ENCODE measurements at regions of chr21 and their contacts with region 1.

Region 1: DNA sequence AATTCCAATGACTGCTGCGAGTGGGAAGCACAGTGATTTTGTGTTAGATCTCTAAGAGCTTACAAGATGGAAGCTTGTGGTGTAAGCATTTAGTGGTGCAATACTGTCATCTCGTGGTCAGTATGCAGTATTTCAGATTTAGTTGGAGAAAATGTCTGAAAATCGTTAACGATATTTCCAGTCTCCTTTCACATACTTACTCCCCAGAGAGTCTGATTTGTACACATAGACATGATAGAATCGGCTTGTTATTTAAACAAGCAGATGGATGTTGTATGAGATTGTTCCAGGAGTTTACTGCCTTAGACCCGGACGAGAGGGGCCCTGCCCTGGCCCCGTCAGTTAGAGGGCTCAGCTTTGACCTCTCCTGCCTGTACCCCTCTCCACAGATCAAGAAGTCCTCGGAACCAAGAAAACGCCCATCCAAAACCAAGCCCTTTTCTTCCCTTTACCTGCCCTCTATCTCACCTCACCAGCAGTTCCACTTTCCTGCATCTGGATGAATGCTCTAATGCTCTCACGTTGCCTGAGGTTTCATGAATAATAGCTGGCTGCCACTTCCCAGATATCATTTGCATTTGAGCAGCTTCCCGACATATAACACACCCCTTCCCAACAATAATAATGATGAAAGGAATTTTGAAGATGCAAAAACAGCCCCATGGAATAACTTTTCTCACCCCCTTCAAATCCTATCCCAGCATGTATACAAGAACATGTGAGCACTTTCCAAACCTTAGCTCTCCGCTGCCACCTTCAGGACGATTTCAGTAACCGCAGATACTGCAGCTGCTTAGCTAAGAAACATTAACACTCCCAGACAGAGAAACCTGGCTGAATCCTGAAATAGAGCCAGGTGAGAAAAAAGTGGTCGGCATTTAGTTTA is 247.3 kb downstream of the LTN1 start:
- ATAC-seq: peak; percentile 81 to 88 (median 86)
- H3K4me3 ChIP-seq: peak overlapping the region in 4 of 5 donors; percentile 16 to 22 (median 18)
- H3K27ac ChIP-seq: no peak overlapping the region
- H3K4me1 ChIP-seq: no peaks in the 10 kb centered on the region

Region 2: GRCh38 chr21:26850108-26850643 is 1895.2 kb before region 1 on chr21:
- in situ Hi-C with region 1: loop called in 6 of 9 experiments (anchors 10 to 25 kb)
- ATAC-seq: no peak
- H3K4me3 ChIP-seq: no peak overlapping the region
- H3K27ac ChIP-seq: no peak overlapping the region
- H3K4me1 ChIP-seq: peaks cover 2 to 6% of the 10 kb centered on the region in 2 donors

Region 3: GRCh38 chr21:28069450-28069923 is 675.9 kb before region 1 on chr21:
- in situ Hi-C with region 1: loop called in 1 of 9 experiments (anchors 25 kb)
- ATAC-seq: peak in 1 of 8 experiments; percentile 82
- H3K4me3 ChIP-seq: no peak overlapping the region
- H3K27ac ChIP-seq: no peak overlapping the region
- H3K4me1 ChIP-seq: peaks cover 0 to 3% of the 10 kb centered on the region in 2 donors

Region 4: GRCh38 chr21:28342212-28342810 is 403.1 kb before region 1 on chr21:
- in situ Hi-C with region 1: loop called in 4 of 9 experiments (anchors 10 to 25 kb)
- ATAC-seq: no peak
- H3K4me3 ChIP-seq: no peak overlapping the region
- H3K27ac ChIP-seq: no peak overlapping the region
- H3K4me1 ChIP-seq: no peaks in the 10 kb centered on the region

Region 5: DNA sequence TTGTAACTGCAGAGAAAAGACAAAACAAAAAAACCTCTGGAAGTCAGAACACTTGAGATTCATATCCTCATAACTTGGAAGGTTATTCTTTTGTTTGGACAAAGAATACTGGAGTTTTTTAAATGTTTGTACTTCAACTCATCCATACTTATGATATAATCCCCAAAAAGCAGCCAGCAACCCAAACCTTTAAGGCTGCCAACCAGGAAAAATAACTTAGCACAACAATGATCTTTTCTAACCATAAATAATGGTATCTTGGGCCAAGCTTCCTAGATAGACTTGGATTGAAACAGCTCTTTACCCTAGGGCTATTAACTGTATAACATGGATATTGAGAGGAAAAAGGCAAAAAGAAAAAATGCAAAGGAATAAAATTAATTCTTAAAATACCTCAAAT is 87.8 kb before region 1 on chr21:
- in situ Hi-C with region 1: no loop called
- ATAC-seq: no peak
- H3K4me3 ChIP-seq: no peak overlapping the region
- H3K27ac ChIP-seq: no peak overlapping the region
- H3K4me1 ChIP-seq: no peaks in the 10 kb centered on the region

Measured in motor neuron (in vitro differentiated cells).